Activated CD4-positive, alpha-beta memory T cell treated with anti-CD3 and anti-CD28 coated beads, Interleukin-2, amount 10 ng/mL, durations not matched to agents 7 days and 5 days (primary cell): ENCODE measurements at regions of chr19 and their contacts with region 1.

Region 1: GRCh38 chr19:15112386-15112785 is 5.2 kb downstream of the SYDE1 start:
- DNase-seq: no peak
- H3K4me3 Mint-ChIP-seq: no peak overlapping the region
- H3K27ac Mint-ChIP-seq: no peak overlapping the region
- H3K4me1 Mint-ChIP-seq: no peaks in the 10 kb centered on the region
- H3K27me3 Mint-ChIP-seq: peaks cover 8% of the 10 kb centered on the region

Region 2: DNA sequence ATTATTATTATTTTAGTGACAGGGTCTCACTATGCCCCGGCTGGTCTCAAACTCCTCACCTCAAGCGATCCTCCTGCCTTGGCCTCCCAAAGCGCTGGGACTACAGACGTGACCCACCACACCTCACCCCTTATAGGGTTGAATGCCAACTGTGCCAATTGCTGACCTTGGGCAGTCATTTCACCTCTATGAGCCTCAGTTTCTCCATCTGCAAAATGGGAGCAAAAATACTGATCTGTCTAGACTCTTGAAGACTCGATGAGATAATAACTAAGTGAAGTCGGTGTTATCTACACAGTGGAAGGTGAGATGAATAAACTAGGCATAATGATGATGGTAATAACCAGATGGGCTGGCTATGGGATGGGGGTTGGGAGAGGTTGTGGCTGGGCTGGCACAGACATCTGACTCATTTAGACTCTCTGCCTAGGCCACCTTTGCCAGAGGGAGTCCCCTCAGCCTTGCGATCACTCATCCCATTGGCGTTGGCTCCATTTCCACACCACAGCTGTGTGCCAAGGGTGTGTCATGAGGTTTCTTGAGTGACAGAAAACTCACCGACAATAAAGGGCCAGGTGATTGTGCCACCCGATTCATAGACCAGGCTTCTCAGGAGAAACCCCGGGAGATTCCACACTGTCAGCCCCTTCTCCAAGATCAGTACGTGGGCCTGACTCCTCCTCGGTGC is 63.4 kb before region 1 on chr19 and contains the start of gene CASP14:
- CTCF ChIA-PET with region 1: no interaction called
- POLR2A ChIA-PET with region 1: no interaction called
- DNase-seq: no peak
- H3K4me3 Mint-ChIP-seq: no peak within 1 kb of the TSS
- H3K27ac Mint-ChIP-seq: no peak within 1 kb of the TSS
- H3K4me1 Mint-ChIP-seq: no peaks in the 10 kb centered on the region
- H3K27me3 Mint-ChIP-seq: peaks cover 6% of the 10 kb centered on the region
- total RNA-seq, gene CASP14: not detected

Region 3: GRCh38 chr19:15101479-15102082 is 10.8 kb before region 1 on chr19:
- CTCF ChIA-PET with region 1: interaction called, 12 read pairs
- POLR2A ChIA-PET with region 1: interaction called, 4 read pairs
- DNase-seq: peak; percentile 63
- H3K4me3 Mint-ChIP-seq: no peak overlapping the region
- H3K27ac Mint-ChIP-seq: no peak overlapping the region
- H3K4me1 Mint-ChIP-seq: peaks cover 4% of the 10 kb centered on the region
- H3K27me3 Mint-ChIP-seq: peaks cover 15% of the 10 kb centered on the region